ENCODE measurements at regions of chr1 and their contacts with region 1.

Region 1: DNA sequence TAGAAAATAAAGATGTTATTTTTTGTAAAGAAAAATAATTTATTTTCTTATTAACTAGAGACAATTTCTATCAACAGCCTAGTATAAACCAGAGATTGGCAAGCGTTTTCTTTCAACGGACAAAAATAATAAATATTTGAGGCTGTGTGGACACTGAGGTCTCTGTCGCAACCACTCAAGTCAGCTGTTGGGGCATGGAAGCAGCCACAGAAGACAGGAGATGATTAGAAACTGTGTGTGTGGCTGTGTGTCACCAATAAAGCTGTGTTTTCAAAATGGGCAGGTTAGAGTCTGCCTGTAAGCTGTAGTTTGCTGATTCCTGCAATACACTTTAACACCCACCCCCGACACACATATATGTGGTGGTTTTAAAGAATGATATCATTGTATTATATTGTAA is 200.6 kb upstream of the HMCN1 start:
- DNase-seq: no peak
- H3K4me3 Mint-ChIP-seq: no peak overlapping the region
- H3K27ac Mint-ChIP-seq: no peak overlapping the region
- H3K4me1 Mint-ChIP-seq: no peaks in the 10 kb centered on the region
- H3K27me3 Mint-ChIP-seq: no peaks in the 10 kb centered on the region
- CTCF ChIP-seq: no peak

Region 2: GRCh38 chr1:185338719-185339622 is 194.6 kb before region 1 on chr1:
- CTCF ChIA-PET with region 1: no interaction called
- intact Hi-C with region 1: no loop called
- DNase-seq: no peak
- H3K4me3 Mint-ChIP-seq: no peak overlapping the region
- H3K27ac Mint-ChIP-seq: no peak overlapping the region
- H3K4me1 Mint-ChIP-seq: no peaks in the 10 kb centered on the region
- H3K27me3 Mint-ChIP-seq: no peaks in the 10 kb centered on the region
- CTCF ChIP-seq: no peak

Region 3: DNA sequence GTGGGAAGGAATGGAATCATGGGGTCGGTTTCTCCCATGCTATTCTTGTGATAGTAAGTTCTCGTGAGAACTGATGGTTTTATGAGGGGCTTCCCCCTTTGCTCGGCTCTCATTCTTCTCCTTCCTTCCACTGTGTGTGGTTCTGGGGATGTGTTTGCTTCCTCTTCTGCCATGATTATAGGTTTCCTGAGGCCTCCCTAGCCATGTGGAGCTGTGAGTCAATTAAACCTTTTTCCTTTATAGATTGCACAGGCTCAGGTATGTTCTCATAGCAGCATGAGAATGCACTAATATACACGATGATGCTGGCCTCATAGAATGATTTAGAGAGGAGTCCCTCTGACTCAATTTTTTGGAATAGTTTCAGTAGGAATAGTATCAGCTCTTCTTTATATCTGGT is 21.2 kb before region 1 on chr1:
- CTCF ChIA-PET with region 1: no interaction called
- intact Hi-C with region 1: loop called (anchors 1 kb)
- DNase-seq: no peak
- H3K4me3 Mint-ChIP-seq: no peak overlapping the region
- H3K27ac Mint-ChIP-seq: no peak overlapping the region
- H3K4me1 Mint-ChIP-seq: peaks cover 17% of the 10 kb centered on the region
- H3K27me3 Mint-ChIP-seq: no peaks in the 10 kb centered on the region
- CTCF ChIP-seq: no peak

Region 4: GRCh38 chr1:185585770-185586169 is 52.2 kb after region 1 on chr1:
- CTCF ChIA-PET with region 1: no interaction called
- intact Hi-C with region 1: no loop called
- DNase-seq: peak; percentile 68
- H3K4me3 Mint-ChIP-seq: no peak overlapping the region
- H3K27ac Mint-ChIP-seq: no peak overlapping the region
- H3K4me1 Mint-ChIP-seq: peaks cover 17% of the 10 kb centered on the region
- H3K27me3 Mint-ChIP-seq: no peaks in the 10 kb centered on the region
- CTCF ChIP-seq: no peak

Measured in Calu3 (cell line).